Pancreas (tissue), 10 donors: ENCODE measurements at regions of chr2 and their contacts with region 1.

Region 1: GRCh38 chr2:113157118-113157896 is 16.5 kb upstream of the PSD4 start:
- DNase-seq: peak; percentile 72 to 89 (median 82)
- ATAC-seq: peak; percentile 83 to 89 (median 85)
- H3K4me3 ChIP-seq: peak overlapping the region; percentile 56 to 69 (median 62)
- H3K27ac ChIP-seq: peak overlapping the region; percentile 64 to 93 (median 78)
- H3K4me1 ChIP-seq: peaks cover 6 to 22% (median 7%) of the 10 kb centered on the region in 3 donors
- H3K27me3 ChIP-seq: no peaks in the 10 kb centered on the region
- CTCF ChIP-seq: no peak

Region 2: DNA sequence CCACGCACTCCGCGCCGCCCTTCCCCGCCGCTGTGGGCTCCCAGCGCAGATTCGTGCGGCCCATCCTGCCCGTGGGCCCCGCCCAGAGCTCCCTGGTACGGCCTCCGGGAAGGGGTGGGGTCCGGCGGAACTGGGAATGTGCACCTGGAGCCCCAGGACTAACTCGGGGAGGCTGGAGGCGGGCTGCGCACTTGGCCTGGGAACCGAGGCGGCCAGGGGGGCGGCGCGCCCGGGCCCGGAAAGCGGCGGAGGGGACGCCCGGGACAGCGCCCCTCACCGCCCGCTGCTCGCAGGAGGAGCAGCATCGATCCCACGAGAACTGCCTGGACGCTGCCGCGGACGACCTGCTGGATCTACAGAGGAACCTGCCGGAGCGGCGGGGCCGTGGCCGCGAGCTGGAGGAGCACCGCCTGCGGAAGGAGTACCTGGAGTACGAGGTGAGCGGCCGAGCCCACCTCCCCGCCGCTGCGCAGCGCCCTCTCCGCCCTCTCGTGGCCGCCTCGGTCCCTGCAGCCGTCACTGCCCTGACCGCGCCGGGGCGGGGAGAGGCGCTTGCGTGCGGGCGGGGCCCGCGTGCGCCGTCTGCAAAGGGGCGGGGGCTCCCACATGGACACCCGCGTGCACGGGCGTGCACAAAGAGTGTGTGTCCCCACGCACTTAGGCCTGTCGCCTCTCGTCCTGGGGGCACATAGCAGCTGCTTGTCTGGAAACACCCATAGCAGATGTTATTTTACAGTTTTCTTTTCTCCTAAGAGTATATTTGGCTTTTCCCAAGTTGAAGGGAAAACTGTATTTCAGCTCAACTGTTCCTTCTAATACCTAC is 41.7 kb after region 1 on chr2:
- intact Hi-C with region 1: loop called in 1 of 3 experiments (anchors 5 kb)
- DNase-seq: peak; percentile 92 to 98 (median 93)
- ATAC-seq: peak; percentile 90 to 93 (median 92)
- H3K4me3 ChIP-seq: peak overlapping the region; percentile 51 to 79 (median 62)
- H3K27ac ChIP-seq: peak overlapping the region; percentile 89 to 96 (median 94)
- H3K4me1 ChIP-seq: peaks cover 0 to 13% (median 5%) of the 10 kb centered on the region in 3 donors
- H3K27me3 ChIP-seq: no peaks in the 10 kb centered on the region
- CTCF ChIP-seq: peak; percentile 93 to 98 (median 95)